ENCODE measurements at regions of chr2 and their contacts with region 1.

Region 1: DNA sequence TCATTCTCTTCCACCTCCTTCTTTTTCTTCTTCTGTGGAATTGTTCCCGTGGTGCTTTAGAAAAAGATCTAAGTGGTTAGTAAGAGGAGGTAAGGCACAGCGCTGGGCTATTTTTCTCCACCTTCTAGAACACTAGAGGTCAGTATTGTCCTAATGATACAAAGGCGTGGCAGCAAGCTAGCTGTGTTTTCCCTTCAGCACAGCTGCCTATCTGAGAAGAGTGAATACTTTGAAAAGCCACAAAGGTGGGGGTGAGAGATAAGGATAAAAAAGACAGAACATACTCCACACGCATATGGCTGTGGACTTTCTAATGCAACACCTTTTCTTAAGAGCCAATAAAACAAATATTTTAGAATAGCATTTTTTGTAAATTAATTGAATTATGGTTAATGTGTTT is 2.1 kb downstream of the CNTNAP5 start:
- DNase-seq: no peak
- ATAC-seq: peak in 1 of 2 donors; percentile 62

Region 2: GRCh38 chr2:124804014-124804940 is 777.1 kb after region 1 on chr2:
- intact Hi-C with region 1: loop called in 1 of 2 experiments (anchors 10 kb)
- DNase-seq: no peak
- ATAC-seq: peak in 1 of 2 donors; percentile 44

Region 3: GRCh38 chr2:124810132-124810531 is 783.0 kb after region 1 on chr2:
- intact Hi-C with region 1: loop called (anchors 2 to 10 kb)
- DNase-seq: no peak
- ATAC-seq: peak; percentile 56 to 61